Naive thymus-derived CD8-positive, alpha-beta T cell (primary cell): ENCODE measurements at regions of chr17 and their contacts with region 1.

Region 1: DNA sequence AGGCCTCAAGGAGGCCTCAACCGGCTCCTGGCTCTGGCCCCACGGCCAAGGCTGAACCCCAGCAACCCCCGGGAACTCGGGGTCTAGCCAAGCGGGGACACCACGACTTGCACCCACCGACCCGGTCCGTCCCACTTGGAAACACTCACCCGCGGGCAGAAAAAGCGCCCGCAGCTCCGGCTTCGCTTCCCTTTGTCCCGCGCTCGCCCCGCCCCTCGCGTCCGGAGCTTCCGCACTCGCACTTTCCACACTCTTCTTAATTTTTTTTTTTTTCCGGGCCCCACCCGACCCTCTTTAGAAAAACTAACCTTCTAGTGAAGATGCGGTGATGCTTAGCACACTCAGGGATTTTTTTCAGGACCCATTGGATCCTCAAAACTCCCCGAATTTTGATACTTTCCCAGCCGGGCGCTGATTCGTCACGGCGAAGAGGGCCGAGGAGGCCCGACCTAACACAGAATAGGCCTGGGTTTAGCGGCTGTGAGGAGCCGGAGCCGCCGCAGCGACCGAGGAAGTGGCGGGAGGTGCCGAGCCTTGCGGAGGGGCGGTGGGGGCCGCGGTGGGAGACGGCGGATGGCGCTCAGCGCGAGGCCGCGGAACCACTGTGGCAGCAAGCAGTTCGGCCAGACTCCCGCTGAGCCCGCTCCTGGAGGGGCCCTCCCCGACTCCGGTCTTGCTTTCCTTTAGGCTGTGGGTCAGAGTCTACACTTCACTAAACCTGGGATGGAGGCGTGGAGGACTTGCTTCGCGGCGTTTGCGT is at the start of gene SMARCE1:
- DNase-seq: peak; percentile 48 to 90 (median 68)
- ATAC-seq: peak; percentile 74 to 81
- H3K4me3 Mint-ChIP-seq: peak within 1 kb of the TSS; percentile 89 to 99 (median 95)
- H3K27ac Mint-ChIP-seq: peak within 1 kb of the TSS; percentile 94 to 100 (median 98)
- H3K4me1 Mint-ChIP-seq: peaks cover 13 to 59% (median 45%) of the 10 kb centered on the region in 4 donors
- H3K27me3 Mint-ChIP-seq: no peaks in the 10 kb centered on the region
- polyA plus RNA-seq, gene SMARCE1: 195 to 229 (median 220) TPM

Region 2: GRCh38 chr17:40551879-40552768 is 95.7 kb before region 1 on chr17:
- POLR2A ChIA-PET with region 1: interaction called, 22 read pairs
- DNase-seq: peak in 3 of 10 donors; percentile 34 to 64 (median 36)
- ATAC-seq: peak in 1 of 2 donors; percentile 1
- H3K4me3 Mint-ChIP-seq: peak overlapping the region in 9 of 10 donors; percentile 22 to 91 (median 83)
- H3K27ac Mint-ChIP-seq: peak overlapping the region; percentile 90 to 100 (median 96)
- H3K4me1 Mint-ChIP-seq: peaks cover 66 to 100% (median 100%) of the 10 kb centered on the region in 4 donors
- H3K27me3 Mint-ChIP-seq: no peaks in the 10 kb centered on the region